PC-9 (cell line): ENCODE measurements at regions of chr17 and their contacts with region 1.

Region 1: DNA sequence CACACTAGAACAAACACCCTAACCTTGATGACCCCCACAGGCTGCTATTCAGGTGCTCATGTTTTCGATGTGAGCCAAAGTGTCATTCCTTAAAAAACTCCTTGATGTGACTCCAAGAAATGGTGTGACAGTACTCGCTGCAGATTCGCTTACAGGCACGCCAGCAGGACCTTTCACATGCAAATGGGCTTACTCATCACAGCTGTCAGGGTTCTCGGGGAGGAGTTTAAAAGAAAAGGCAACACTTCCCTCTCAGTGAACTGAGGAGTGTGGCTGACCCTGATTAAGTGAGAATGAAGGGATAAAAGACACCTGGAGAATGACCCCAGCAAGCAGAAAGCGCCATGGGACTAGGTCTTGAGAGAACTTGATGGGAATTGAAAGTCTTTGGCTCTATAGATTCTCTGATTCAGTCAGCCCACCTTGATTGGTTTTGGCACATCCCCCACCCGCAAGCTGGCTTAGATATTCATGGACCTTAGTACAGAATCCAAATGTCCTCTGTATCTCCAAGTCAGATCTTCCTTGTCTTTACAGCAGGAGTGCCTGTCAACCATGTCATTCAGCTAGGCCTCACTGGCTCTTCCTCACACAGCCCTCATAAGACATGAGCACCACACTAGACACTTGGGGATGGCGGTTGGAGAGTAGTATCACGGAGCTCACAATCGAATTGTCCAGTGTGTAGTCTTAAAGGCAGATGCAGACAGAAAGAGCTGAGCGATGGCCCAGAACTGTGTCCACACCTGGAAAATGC is 82.6 kb downstream of the HIC1 start:
- DNase-seq: peak in 1 of 2 experiments; percentile 43
- H3K4me3 ChIP-seq: no peak overlapping the region
- H3K27ac ChIP-seq: no peak overlapping the region
- H3K4me1 ChIP-seq: peaks cover 16% of the 10 kb centered on the region
- H3K27me3 ChIP-seq: no peaks in the 10 kb centered on the region
- CTCF ChIP-seq: no peak

Region 2: GRCh38 chr17:2101448-2102257 is 35.9 kb before region 1 on chr17:
- CTCF ChIA-PET with region 1: no interaction called
- POLR2A ChIA-PET with region 1: interaction called, 3 read pairs
- intact Hi-C with region 1: loop called (anchors 5 kb)
- DNase-seq: peak; percentile 96 to 99
- H3K4me3 ChIP-seq: no peak overlapping the region
- H3K27ac ChIP-seq: peak overlapping the region; percentile 77
- H3K4me1 ChIP-seq: peaks cover 17% of the 10 kb centered on the region
- H3K27me3 ChIP-seq: no peaks in the 10 kb centered on the region
- CTCF ChIP-seq: no peak

Region 3: DNA sequence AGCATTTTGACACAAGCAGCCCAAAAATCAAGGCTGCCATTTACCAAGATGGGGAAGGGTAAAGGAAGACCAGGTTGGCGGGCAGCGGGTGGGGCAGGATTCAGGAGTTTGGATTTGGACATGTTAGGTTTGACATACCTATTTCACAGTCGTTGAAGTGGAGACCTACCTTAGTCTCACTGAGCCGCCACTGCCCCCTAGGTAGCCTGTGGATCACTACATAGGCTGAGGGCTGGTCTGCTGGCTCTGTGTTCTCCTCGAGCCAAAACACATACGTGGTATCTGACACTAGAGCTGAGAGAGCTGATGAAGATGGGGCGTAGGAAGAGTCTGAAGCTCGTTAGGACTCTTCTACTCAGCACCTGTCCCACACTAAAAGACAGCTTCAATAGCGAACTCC is 32.5 kb after region 1 on chr17:
- CTCF ChIA-PET with region 1: interaction called, 10 read pairs
- POLR2A ChIA-PET with region 1: no interaction called
- intact Hi-C with region 1: no loop called
- DNase-seq: peak in 1 of 2 experiments; percentile 22
- H3K4me3 ChIP-seq: no peak overlapping the region
- H3K27ac ChIP-seq: no peak overlapping the region
- H3K4me1 ChIP-seq: no peaks in the 10 kb centered on the region
- H3K27me3 ChIP-seq: no peaks in the 10 kb centered on the region
- CTCF ChIP-seq: peak; percentile 57; the same call in 1 of the 2 replicates

Region 4: DNA sequence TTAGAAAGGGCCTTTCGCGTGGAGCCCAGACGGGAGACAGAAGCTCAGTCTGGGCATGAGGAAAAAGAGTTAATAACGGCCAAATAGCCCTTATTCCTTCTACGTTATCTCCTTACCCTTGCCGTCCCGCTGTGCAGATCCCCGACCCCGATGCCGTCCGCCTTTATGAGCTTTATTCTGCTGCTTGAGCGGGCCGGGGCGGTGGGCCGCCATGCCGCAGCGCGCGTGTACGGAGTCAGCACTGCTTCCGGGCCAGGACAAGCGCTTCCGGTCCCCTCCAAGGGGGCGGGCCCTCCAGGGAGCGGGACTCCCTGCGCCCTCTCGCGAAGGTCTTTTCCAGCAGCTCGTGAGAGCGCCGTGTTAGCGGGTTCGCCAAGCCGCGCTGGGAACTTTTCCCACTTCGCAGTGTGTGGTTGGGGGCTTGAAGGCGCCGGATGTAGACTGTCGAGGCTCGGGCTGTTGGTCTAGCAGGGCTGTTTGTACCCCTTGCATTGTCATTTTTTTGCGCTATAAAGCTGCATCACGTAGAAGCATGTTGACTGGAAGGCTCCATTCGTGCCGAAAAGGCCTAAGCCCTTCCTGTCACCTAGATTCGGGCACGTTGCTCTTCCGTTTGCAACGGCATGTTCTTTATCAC is 198.8 kb after region 1 on chr17 and contains the start of gene TSR1:
- CTCF ChIA-PET with region 1: no interaction called
- POLR2A ChIA-PET with region 1: no interaction called
- intact Hi-C with region 1: no loop called
- DNase-seq: peak; percentile 79 to 89
- H3K4me3 ChIP-seq: peak within 1 kb of the TSS; percentile 90
- H3K27ac ChIP-seq: peak within 1 kb of the TSS; percentile 54
- H3K4me1 ChIP-seq: peaks cover 20% of the 10 kb centered on the region; the same call in 1 of the 2 replicates
- H3K27me3 ChIP-seq: no peaks in the 10 kb centered on the region
- CTCF ChIP-seq: 0 out of 2 replicates have a peak, but pooled peaks have one; percentile 14
- total RNA-seq, gene TSR1: 42.3 and 42.5 TPM in 2 replicates

Region 5: GRCh38 chr17:2347547-2348307 is 210.2 kb after region 1 on chr17:
- CTCF ChIA-PET with region 1: no interaction called
- POLR2A ChIA-PET with region 1: no interaction called
- intact Hi-C with region 1: no loop called
- DNase-seq: peak; percentile 93 to 95
- H3K4me3 ChIP-seq: no peak overlapping the region; the same call in 1 of the 2 replicates
- H3K27ac ChIP-seq: peak overlapping the region; percentile 77
- H3K4me1 ChIP-seq: peaks cover 34% of the 10 kb centered on the region
- H3K27me3 ChIP-seq: no peaks in the 10 kb centered on the region
- CTCF ChIP-seq: no peak

Region 6: DNA sequence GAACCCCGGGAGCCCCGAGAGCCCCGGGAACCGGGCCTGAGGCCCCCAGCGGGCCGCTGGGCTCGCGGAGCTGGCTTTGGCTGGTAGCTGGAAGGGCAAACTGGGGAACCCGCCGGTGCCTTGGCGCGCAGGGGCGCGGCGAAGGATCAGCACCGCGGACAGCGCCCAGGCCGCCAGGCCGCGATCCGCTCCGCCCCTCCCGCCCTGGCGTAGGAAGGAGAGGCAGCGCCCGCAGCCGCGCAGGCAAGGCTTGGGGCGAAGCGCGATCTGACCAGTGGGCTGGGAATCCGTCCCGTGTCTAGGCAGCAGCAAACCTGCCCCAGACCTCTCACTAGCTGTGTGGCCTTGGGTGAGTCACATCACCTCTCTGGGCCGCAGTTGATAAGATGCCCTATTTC is 612.3 kb after region 1 on chr17:
- CTCF ChIA-PET with region 1: no interaction called
- POLR2A ChIA-PET with region 1: no interaction called
- intact Hi-C with region 1: no loop called
- DNase-seq: peak; percentile 58 to 82
- H3K4me3 ChIP-seq: no peak overlapping the region
- H3K27ac ChIP-seq: no peak overlapping the region
- H3K4me1 ChIP-seq: no peaks in the 10 kb centered on the region
- H3K27me3 ChIP-seq: peaks cover 66% of the 10 kb centered on the region
- CTCF ChIP-seq: no peak